ENCODE measurements at regions of chr2 and their contacts with region 1.

Region 1: GRCh38 chr2:179751163-179751809 is 110.1 kb downstream of the ZNF385B start:
- DNase-seq: peak in 1 of 2 experiments; percentile 4
- H3K4me3 ChIP-seq: no peak overlapping the region
- H3K4me3 Mint-ChIP-seq: no peak overlapping the region
- H3K27ac Mint-ChIP-seq: no peak overlapping the region
- H3K4me1 ChIP-seq: no peaks in the 10 kb centered on the region
- H3K4me1 Mint-ChIP-seq: peaks cover 4% of the 10 kb centered on the region
- H3K27me3 ChIP-seq: no peaks in the 10 kb centered on the region
- H3K27me3 Mint-ChIP-seq: peaks cover 3% of the 10 kb centered on the region
- CTCF ChIP-seq: peak; percentile 52 to 72

Region 2: GRCh38 chr2:179410552-179411356 is 340.5 kb before region 1 on chr2:
- CTCF ChIA-PET with region 1: interaction called, 5 read pairs
- POLR2A ChIA-PET with region 1: no interaction called
- intact Hi-C with region 1: loop called (anchors 1 kb)
- DNase-seq: peak; percentile 54 to 68
- H3K4me3 ChIP-seq: no peak overlapping the region
- H3K4me3 Mint-ChIP-seq: no peak overlapping the region
- H3K27ac Mint-ChIP-seq: no peak overlapping the region
- H3K4me1 ChIP-seq: no peaks in the 10 kb centered on the region
- H3K4me1 Mint-ChIP-seq: no peaks in the 10 kb centered on the region
- H3K27me3 ChIP-seq: no peaks in the 10 kb centered on the region
- H3K27me3 Mint-ChIP-seq: no peaks in the 10 kb centered on the region
- CTCF ChIP-seq: peak; percentile 78 to 84

Region 3: DNA sequence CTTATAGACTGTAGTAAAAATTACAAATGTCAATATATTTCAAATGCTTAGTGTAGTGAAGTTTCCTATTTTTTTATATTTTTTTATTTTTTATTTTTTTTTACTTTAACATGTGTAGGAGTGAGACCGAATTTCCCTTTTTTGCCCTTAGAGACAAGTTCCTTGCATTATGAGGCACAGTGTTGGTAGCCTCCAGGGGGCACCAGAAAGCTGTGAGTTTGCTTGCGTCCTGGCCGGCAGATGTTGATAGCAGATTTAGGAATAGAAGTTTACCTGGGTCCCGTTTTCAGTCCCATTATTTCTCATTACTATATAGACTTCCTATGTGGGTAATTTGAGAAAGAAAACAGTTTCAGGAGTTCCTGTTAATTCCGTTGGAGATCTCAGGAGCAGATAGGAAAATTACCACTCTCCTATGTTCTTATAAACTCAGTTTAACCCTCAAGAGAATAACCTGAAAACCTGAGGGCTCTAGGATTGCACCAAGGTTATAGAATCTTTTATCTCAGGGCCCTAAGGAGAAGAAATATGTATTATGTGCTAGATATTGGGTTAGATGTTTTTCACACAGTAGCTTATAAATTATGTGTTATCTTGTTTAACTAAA is 329.1 kb before region 1 on chr2:
- CTCF ChIA-PET with region 1: no interaction called
- POLR2A ChIA-PET with region 1: no interaction called
- intact Hi-C with region 1: loop called (anchors 1 kb)
- DNase-seq: peak; percentile 72 to 80
- H3K4me3 ChIP-seq: no peak overlapping the region
- H3K4me3 Mint-ChIP-seq: no peak overlapping the region
- H3K27ac Mint-ChIP-seq: no peak overlapping the region
- H3K4me1 ChIP-seq: 0 out of 2 replicates have a peak, but pooled peaks cover 3% of the 10 kb centered on the region
- H3K4me1 Mint-ChIP-seq: no peaks in the 10 kb centered on the region
- H3K27me3 ChIP-seq: no peaks in the 10 kb centered on the region
- H3K27me3 Mint-ChIP-seq: no peaks in the 10 kb centered on the region
- CTCF ChIP-seq: peak; percentile 60 to 93

Region 4: DNA sequence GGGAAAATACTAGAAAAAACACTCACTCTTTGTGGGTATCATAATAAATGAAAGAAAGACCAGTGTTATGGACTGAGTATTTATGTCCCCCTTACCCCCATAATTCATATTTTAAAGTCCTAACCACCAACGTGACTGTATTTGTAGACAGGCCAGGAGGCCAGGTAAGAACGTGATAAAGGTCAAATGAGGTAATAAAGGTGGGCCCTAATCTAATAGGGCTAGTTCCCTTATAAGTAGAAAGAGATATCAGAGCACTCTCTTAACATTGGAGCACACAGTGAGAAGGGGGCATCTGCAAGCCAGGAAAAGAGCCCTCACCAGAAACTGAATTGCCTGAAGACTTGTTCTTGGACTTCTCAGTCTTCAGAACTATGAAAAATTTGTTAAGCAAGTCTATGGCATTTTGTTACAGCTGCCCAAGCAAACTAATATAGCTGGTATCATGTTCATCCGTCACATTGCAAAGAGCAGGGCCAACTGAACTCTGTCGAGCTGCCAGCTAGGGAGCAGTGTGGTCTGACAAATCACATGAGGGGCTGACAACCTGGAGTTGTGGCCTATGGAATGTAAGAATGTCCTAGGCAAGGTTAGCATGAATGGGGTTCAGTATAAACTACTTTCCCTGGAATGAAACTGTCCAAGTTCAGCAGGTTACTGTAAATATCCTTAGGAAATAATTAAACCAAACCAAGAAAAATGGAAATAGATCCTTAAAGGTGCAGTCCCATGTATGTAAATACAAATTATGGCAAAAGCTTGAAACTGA is 170.7 kb before region 1 on chr2:
- CTCF ChIA-PET with region 1: no interaction called
- POLR2A ChIA-PET with region 1: no interaction called
- intact Hi-C with region 1: loop called (anchors 5 kb)
- DNase-seq: peak in 1 of 2 experiments; percentile 18
- H3K4me3 ChIP-seq: no peak overlapping the region
- H3K4me3 Mint-ChIP-seq: no peak overlapping the region
- H3K27ac Mint-ChIP-seq: no peak overlapping the region
- H3K4me1 ChIP-seq: peaks cover 24% of the 10 kb centered on the region
- H3K4me1 Mint-ChIP-seq: no peaks in the 10 kb centered on the region
- H3K27me3 ChIP-seq: no peaks in the 10 kb centered on the region
- H3K27me3 Mint-ChIP-seq: no peaks in the 10 kb centered on the region
- CTCF ChIP-seq: no peak

Region 5: DNA sequence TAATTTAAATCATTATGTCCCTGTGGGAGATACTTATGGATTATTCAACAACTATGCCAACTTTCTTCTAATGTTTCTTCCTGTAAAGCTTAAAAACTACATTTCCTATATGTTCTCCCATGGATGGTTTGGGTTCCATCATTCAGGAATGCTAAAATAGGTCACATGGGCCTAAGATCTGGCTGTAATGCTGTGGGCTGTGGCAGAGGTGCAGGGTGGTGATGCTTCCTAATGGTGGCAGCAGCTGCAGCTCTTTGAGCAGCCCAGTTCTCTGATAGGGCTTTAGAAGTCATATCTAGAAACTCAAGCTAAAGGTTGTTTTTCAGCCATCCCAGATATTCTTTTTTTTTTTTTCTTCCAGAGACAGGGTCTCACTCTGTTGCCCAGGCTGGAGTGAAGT is 156.0 kb before region 1 on chr2:
- CTCF ChIA-PET with region 1: no interaction called
- POLR2A ChIA-PET with region 1: no interaction called
- intact Hi-C with region 1: loop called (anchors 1 kb)
- DNase-seq: peak; percentile 28 to 44
- H3K4me3 ChIP-seq: no peak overlapping the region
- H3K4me3 Mint-ChIP-seq: no peak overlapping the region
- H3K27ac Mint-ChIP-seq: no peak overlapping the region
- H3K4me1 ChIP-seq: no peaks in the 10 kb centered on the region
- H3K4me1 Mint-ChIP-seq: no peaks in the 10 kb centered on the region
- H3K27me3 ChIP-seq: no peaks in the 10 kb centered on the region
- H3K27me3 Mint-ChIP-seq: no peaks in the 10 kb centered on the region
- CTCF ChIP-seq: peak in 1 of 2 experiments; percentile 10

Region 6: GRCh38 chr2:179985163-179985820 is 234.0 kb after region 1 on chr2:
- CTCF ChIA-PET with region 1: no interaction called
- POLR2A ChIA-PET with region 1: no interaction called
- intact Hi-C with region 1: no loop called
- DNase-seq: no peak
- H3K4me3 ChIP-seq: no peak overlapping the region
- H3K4me3 Mint-ChIP-seq: no peak overlapping the region
- H3K27ac Mint-ChIP-seq: no peak overlapping the region
- H3K4me1 ChIP-seq: no peaks in the 10 kb centered on the region
- H3K4me1 Mint-ChIP-seq: no peaks in the 10 kb centered on the region
- H3K27me3 ChIP-seq: no peaks in the 10 kb centered on the region
- H3K27me3 Mint-ChIP-seq: no peaks in the 10 kb centered on the region
- CTCF ChIP-seq: no peak

Measured in Caco-2 (cell line).